Stomach (tissue), 19 donors: ENCODE measurements at regions of chr3 and their contacts with region 1.

Region 1: GRCh38 chr3:195863121-195864006 is 45.0 kb downstream of the TNK2 start:
- DNase-seq: peak; percentile 91 to 94
- H3K4me3 ChIP-seq: no peak overlapping the region
- H3K27ac ChIP-seq: peak overlapping the region in 4 of 5 donors; percentile 34 to 70 (median 56)
- H3K4me1 ChIP-seq: peaks cover 10 to 25% (median 18%) of the 10 kb centered on the region in 4 donors
- H3K27me3 ChIP-seq: no peaks in the 10 kb centered on the region
- CTCF ChIP-seq: peak in 5 of 7 experiments; percentile 88 to 94 (median 92)
- EP300 ChIP-seq: no peak
- POLR2A ChIP-seq: no peak

Region 2: GRCh38 chr3:195894780-195895607 is 31.6 kb after region 1 on chr3:
- intact Hi-C with region 1: loop called (anchors 5 kb)
- DNase-seq: peak; percentile 52 to 94
- H3K4me3 ChIP-seq: peak overlapping the region; percentile 51 to 69 (median 64)
- H3K27ac ChIP-seq: peak overlapping the region; percentile 28 to 90 (median 87)
- H3K4me1 ChIP-seq: peaks cover 51 to 78% (median 69%) of the 10 kb centered on the region in 4 donors
- H3K27me3 ChIP-seq: no peaks in the 10 kb centered on the region
- CTCF ChIP-seq: peak in 6 of 7 experiments; percentile 87 to 98 (median 96)
- EP300 ChIP-seq: no peak
- POLR2A ChIP-seq: no peak

Region 3: DNA sequence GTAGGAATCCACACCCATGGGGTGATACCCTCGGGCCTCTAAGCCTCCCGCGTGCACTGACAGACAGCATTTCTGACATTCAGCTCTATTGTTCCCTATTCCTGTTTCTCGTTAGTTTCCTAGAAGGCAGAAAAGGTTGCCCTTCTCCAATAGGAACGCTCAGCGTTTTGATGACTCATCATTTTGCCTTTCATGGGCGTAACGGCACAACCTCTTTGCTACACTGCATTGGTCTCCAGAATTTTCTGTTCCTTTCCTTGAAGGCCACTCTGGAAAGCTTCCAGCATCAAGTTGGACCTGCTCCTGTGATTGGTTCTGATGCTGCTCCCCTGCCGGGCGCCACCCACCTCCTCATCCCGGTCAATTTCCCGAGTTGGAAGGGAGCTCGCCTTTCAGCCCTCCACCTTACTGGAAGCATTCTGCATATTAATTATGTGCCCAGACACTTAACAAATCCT is 58.0 kb after region 1 on chr3:
- intact Hi-C with region 1: no loop called
- DNase-seq: no peak
- H3K4me3 ChIP-seq: no peak overlapping the region
- H3K27ac ChIP-seq: no peak overlapping the region
- H3K4me1 ChIP-seq: no peaks in the 10 kb centered on the region
- H3K27me3 ChIP-seq: peaks cover 0 to 8% (median 0%) of the 10 kb centered on the region in 3 donors
- CTCF ChIP-seq: no peak
- EP300 ChIP-seq: no peak
- POLR2A ChIP-seq: no peak